ENCODE measurements at regions of chr20 and their contacts with region 1.

Region 1: GRCh38 chr20:561437-562231 is 18.0 kb upstream of the CSNK2A1 start:
- ATAC-seq: peak; percentile 77 to 93 (median 85)
- H3K4me3 ChIP-seq: no peak overlapping the region
- H3K27ac ChIP-seq: no peak overlapping the region
- H3K4me1 ChIP-seq: peaks cover 0 to 3% of the 10 kb centered on the region in 2 donors

Region 2: DNA sequence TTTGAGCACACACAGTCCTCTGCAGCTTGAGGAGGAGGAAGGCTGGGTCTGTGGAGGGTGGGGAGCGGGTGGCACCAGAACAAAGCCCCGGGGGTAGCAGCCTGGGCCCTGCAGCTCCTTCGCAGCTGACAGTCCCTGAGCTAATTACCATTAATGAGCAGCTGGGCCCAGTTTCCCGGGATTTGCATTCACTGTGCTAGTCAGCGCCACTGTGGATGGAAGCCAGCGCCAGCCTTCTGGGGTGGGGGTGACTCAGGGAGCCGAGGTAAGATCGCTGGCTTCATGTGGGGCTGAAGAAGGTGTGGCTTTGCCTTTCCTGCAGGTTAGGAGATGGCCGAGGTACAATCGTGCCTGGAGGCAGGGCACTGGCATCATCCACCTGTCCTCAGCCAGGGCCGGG is 72.9 kb after region 1 on chr20:
- in situ Hi-C with region 1: loop called in 1 of 9 experiments (anchors 10 kb)
- ATAC-seq: peak; percentile 61 to 91 (median 86)
- H3K4me3 ChIP-seq: no peak overlapping the region
- H3K27ac ChIP-seq: peak overlapping the region in 1 of 2 donors; percentile 69
- H3K4me1 ChIP-seq: peaks cover 17 to 24% of the 10 kb centered on the region in 2 donors

Region 3: DNA sequence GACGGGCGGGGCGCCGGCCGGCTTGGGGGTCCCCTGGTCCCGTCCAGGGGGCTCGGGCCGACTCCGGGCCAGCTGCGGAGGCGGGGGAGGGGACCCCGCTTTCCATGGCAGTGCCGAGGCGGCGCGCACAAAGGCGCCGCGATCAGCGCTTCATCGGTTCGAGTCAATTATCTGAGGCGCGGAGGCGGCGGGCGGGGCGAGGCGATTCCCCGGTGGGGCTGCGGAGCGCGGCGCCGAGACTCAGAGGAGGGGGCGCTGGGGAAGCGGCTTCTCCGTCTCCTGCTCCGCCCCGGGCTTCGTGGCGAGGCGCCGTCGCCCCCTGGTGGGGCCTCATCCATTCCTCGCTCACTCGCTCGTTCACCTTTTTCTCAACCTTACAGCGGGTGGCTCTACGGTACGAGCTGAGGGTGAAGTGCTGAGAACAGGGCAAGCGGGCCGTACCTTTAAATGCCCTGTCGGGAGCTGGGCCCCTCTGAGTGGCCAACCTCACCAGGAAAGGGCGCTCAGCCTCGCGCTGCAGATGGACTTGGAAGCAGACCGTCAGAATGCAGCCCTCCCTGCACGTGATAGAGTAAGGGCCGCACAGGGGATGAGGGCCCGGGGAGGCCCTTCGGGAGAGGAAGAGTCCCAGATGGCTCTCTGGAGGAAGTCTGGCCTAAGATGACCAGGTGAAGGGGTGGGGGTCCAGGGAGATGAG is 166.8 kb after region 1 on chr20:
- in situ Hi-C with region 1: loop called in 8 of 9 experiments (anchors 10 to 25 kb)
- ATAC-seq: peak; percentile 82 to 98 (median 96)
- H3K4me3 ChIP-seq: peak overlapping the region; percentile 38 to 49 (median 47)
- H3K27ac ChIP-seq: peak overlapping the region; percentile 69 to 75
- H3K4me1 ChIP-seq: peaks cover 14 to 15% of the 10 kb centered on the region in 2 donors

Region 4: GRCh38 chr20:733861-734260 is 172.2 kb after region 1 on chr20:
- in situ Hi-C with region 1: loop called in 8 of 9 experiments (anchors 10 to 25 kb)
- ATAC-seq: peak in 5 of 8 experiments; percentile 85 to 90 (median 86)
- H3K4me3 ChIP-seq: no peak overlapping the region
- H3K27ac ChIP-seq: peak overlapping the region; percentile 26 to 54
- H3K4me1 ChIP-seq: peaks cover 19 to 20% of the 10 kb centered on the region in 2 donors

Measured in motor neuron (in vitro differentiated cells).